SK-MEL-5 (cell line): ENCODE measurements at regions of chr17 and their contacts with region 1.

Region 1: DNA sequence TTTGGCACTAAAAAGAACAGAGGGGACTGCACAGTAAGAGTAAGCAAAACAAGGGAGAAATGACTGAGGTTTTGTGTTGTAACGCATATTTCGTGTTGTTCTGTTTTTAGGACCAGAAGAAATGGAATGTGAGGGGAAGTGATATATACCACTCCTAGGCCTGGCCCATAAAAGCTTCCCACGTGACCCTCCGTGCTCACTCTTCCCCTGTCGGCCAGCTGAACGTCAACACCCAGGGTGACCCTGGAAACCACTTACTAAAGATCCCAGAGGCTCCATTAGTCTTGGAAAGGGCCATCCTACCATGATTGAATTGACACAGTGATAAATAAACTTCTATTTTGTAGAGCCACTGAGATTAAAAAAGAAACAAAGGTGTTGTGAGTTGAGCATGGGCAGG is 79.8 kb downstream of the HELZ start:
- DNase-seq: no peak

Region 2: GRCh38 chr17:67011502-67012175 is 153.6 kb before region 1 on chr17:
- in situ Hi-C with region 1: no loop called
- DNase-seq: no peak

Region 3: GRCh38 chr17:67132346-67132745 is 32.9 kb before region 1 on chr17:
- in situ Hi-C with region 1: loop called (anchors 5 kb)
- DNase-seq: no peak